ENCODE measurements at regions of chr1 and their contacts with region 1.

Region 1: DNA sequence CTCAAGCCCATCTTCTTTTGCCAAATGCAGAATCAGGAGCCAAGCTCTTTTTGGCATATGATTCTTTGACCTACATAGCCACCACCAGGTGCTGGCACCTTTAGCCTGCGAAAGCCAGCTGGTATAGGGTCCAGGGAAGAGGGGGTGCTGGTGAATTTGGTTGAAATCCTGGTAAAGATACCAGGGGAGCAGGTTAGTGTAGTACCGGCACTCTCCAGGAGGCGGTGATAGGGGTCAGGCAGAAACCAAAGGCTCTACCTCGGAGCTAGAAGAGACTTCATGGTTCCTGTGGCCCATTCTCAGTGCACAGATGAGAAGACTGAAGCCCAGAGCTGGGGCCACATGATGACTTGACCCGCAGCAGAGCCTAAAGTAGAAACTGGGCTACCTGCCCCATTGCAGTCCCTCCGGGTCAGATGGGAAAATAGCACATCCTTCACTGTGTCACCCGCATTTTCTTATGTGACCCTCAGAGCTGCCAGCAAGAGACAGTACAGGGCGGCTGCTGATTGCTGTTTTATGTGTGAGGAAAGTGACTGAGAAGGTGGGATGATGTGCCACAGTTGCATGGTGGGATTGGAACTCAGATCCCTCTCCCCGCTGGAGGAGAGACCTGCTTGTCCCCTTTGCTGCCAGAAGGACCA is 36.0 kb upstream of the IL19 start:
- DNase-seq: no peak
- ATAC-seq: peak in 3 of 4 donors; percentile 11 to 37 (median 19)
- H3K4me3 ChIP-seq: no peak overlapping the region
- H3K27ac ChIP-seq: peak overlapping the region in 2 of 12 donors; percentile 6 to 60
- H3K4me1 ChIP-seq: peaks cover 0 to 64% (median 36%) of the 10 kb centered on the region in 12 donors
- H3K27me3 ChIP-seq: no peaks in the 10 kb centered on the region
- CTCF ChIP-seq: peak; percentile 42 to 74 (median 65)
- POLR2A ChIP-seq: no peak

Region 2: GRCh38 chr1:206803221-206803730 is 68.7 kb after region 1 on chr1:
- intact Hi-C with region 1: loop called in 6 of 10 experiments (anchors 2 to 10 kb)
- DNase-seq: no peak
- ATAC-seq: peak in 2 of 4 donors; percentile 18 to 62
- H3K4me3 ChIP-seq: no peak overlapping the region
- H3K27ac ChIP-seq: peak overlapping the region in 1 of 12 donors; percentile 82
- H3K4me1 ChIP-seq: peaks cover 0 to 29% (median 0%) of the 10 kb centered on the region in 12 donors
- H3K27me3 ChIP-seq: no peaks in the 10 kb centered on the region
- CTCF ChIP-seq: no peak
- POLR2A ChIP-seq: no peak

Region 3: GRCh38 chr1:206808615-206809014 is 74.0 kb after region 1 on chr1:
- intact Hi-C with region 1: loop called in 6 of 10 experiments (anchors 2 to 10 kb)
- DNase-seq: no peak
- ATAC-seq: peak; percentile 51 to 80 (median 78)
- H3K4me3 ChIP-seq: no peak overlapping the region
- H3K27ac ChIP-seq: no peak overlapping the region
- H3K4me1 ChIP-seq: peaks cover 0 to 18% (median 0%) of the 10 kb centered on the region in 12 donors
- H3K27me3 ChIP-seq: no peaks in the 10 kb centered on the region
- CTCF ChIP-seq: peak; percentile 15 to 54 (median 38)
- POLR2A ChIP-seq: no peak

Region 4: DNA sequence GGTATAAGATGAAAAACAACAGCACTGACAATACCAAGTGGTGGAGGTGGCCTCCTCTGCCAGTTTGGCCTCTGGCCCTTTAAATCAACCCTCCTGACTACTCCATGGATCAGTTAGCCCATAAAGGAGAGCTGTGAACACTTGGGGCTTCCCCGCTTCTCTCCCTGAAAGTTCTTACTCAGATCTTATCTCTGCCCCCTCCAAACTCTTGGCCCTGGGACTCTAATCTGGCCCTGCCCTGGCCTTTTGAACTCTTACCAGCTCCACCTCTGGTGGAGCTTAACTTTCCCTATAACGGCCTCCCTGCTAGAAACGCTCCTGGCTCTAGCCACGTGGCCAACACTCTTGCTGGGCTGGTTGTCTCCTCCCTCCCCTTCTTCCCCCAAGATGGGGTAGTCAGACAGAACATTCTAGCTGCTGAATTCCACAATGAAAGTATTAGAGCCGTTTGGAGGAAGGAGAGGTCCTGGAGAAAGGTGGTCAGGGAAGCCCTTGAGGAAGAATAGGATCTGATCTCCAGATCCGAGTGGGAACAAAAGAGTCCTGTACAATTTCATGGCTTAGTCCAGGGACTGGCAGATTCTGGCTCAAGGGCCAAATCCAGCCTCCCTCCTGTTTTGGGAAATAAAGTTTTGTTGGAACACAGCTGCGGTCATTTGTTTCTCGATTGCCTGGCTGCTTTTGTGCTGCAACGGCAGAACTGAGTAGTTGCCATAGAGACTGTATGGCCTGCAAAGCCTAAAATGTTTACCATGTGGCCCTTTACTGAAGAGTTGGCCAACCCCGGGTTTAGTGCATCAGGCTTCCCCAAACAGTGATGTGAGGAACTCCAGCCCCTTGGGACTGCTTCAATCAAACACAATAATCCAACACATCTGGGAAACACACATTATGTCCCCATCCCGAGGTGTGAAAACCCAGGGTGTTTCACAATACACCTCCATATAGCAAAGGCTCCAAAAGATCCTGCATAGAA is 221.1 kb after region 1 on chr1:
- intact Hi-C with region 1: no loop called
- DNase-seq: no peak
- ATAC-seq: peak in 1 of 4 donors; percentile 26
- H3K4me3 ChIP-seq: no peak overlapping the region
- H3K27ac ChIP-seq: no peak overlapping the region
- H3K4me1 ChIP-seq: no peaks in the 10 kb centered on the region
- H3K27me3 ChIP-seq: peaks cover 0 to 6% (median 0%) of the 10 kb centered on the region in 9 donors
- CTCF ChIP-seq: no peak
- POLR2A ChIP-seq: no peak